PC-9 (cell line): ENCODE measurements at regions of chr12 and their contacts with region 1.

Region 1: GRCh38 chr12:82685790-82686167 is 927 bp upstream of the TMTC2 start:
- DNase-seq: peak; percentile 88 to 90
- H3K4me3 ChIP-seq: peak overlapping the region; percentile 62
- H3K27ac ChIP-seq: peak overlapping the region; percentile 92
- H3K4me1 ChIP-seq: peaks cover 33% of the 10 kb centered on the region
- H3K27me3 ChIP-seq: no peaks in the 10 kb centered on the region
- CTCF ChIP-seq: peak; percentile 93

Region 2: DNA sequence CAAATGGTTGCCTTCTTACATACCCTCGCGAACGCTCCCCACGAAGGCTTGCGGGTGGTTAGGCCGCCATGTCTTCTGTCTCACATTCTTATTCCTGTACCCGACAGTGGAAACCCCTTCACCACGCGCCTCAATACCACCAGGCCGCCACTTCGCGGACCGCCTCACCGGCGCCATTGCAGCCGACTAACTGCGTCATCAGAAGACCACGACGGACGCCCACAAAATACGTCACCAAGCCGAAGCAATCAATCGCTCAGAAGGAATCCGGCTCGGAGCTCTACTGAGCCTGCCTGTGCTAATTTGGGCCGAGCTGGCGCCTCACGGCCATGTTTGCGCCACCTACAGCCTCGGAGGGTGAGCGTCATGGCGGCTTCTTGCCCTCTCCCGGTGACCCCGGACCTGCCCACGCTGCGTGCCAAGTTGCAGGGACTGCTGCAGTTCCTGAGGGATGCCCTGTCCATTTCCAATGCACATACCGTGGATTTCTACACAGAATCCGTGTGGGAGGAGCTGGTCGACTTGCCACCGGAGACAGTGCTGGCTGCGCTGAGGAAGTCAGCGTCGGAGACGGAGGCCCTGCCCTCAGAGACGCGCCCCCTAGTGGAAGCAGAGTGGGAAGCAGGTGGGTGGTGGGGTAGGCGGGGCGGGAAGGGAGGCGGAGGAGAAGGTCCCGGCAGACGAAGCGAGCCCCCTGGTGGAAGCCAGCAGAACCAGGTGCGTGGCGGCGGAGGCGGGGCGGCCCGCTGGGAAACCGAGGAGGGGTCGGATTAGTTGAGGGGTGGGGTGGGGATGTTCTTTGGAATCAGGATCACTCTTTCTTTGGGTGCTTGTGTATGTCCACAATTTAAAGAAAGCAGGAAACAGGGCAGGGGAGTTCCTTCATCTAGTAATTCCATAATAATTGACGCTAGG is 327.3 kb before region 1 on chr12 and contains the starts of genes CCDC59 and METTL25:
- CTCF ChIA-PET with region 1: no interaction called
- POLR2A ChIA-PET with region 1: no interaction called
- intact Hi-C with region 1: loop called (anchors 1 kb)
- DNase-seq: peak; percentile 91 to 93
- H3K4me3 ChIP-seq: peak within 1 kb of the TSS; percentile 89
- H3K27ac ChIP-seq: peak within 1 kb of the TSS; percentile 86
- H3K4me1 ChIP-seq: peaks cover 10% of the 10 kb centered on the region; the same call in 1 of the 2 replicates
- H3K27me3 ChIP-seq: no peaks in the 10 kb centered on the region
- CTCF ChIP-seq: peak; percentile 97
- total RNA-seq, gene CCDC59: 28.9 and 49.9 TPM in 2 replicates
- total RNA-seq, gene METTL25: 2.2 and 2.8 TPM in 2 replicates

Region 3: GRCh38 chr12:82527165-82527780 is 158.5 kb before region 1 on chr12:
- CTCF ChIA-PET with region 1: interaction called, 4 read pairs
- POLR2A ChIA-PET with region 1: no interaction called
- intact Hi-C with region 1: loop called (anchors 1 kb)
- DNase-seq: peak; percentile 21 to 37
- H3K4me3 ChIP-seq: no peak overlapping the region
- H3K27ac ChIP-seq: no peak overlapping the region
- H3K4me1 ChIP-seq: no peaks in the 10 kb centered on the region
- H3K27me3 ChIP-seq: no peaks in the 10 kb centered on the region
- CTCF ChIP-seq: peak; percentile 94

Region 4: GRCh38 chr12:83003044-83003443 is 317.3 kb after region 1 on chr12:
- CTCF ChIA-PET with region 1: no interaction called
- POLR2A ChIA-PET with region 1: no interaction called
- intact Hi-C with region 1: loop called (anchors 5 kb)
- DNase-seq: no peak
- H3K4me3 ChIP-seq: no peak overlapping the region
- H3K27ac ChIP-seq: no peak overlapping the region
- H3K4me1 ChIP-seq: no peaks in the 10 kb centered on the region
- H3K27me3 ChIP-seq: no peaks in the 10 kb centered on the region
- CTCF ChIP-seq: no peak

Region 5: DNA sequence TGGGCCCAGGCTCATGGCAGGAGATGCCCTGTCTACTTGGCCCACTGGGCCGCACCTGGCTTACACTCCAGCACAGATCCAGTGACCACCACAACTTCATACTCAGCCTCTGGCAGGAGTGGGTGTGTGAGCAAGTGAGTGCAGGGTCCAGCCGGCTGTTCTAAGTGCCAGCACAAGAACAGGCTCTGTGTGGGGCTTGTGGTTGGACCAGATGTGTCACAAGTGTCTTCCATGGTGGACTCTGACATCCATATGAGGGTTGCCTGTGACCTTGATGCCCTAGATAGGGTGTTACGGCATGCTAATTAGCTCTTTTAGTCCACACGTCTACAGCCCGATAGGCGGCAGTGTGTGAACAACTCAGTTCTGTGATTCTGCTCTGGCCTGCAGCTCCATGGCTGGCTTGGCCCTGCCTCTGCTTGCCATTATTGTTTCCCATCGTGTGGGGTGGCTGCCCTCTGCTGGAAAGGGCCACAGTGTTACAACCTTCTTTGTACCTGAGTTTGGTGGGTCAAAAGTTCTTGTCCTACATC is 1137.7 kb after region 1 on chr12:
- CTCF ChIA-PET with region 1: interaction called, 7 read pairs
- POLR2A ChIA-PET with region 1: no interaction called
- intact Hi-C with region 1: loop called (anchors 1 kb)
- DNase-seq: peak; percentile 38 to 41
- H3K4me3 ChIP-seq: no peak overlapping the region
- H3K27ac ChIP-seq: no peak overlapping the region
- H3K4me1 ChIP-seq: no peaks in the 10 kb centered on the region
- H3K27me3 ChIP-seq: no peaks in the 10 kb centered on the region
- CTCF ChIP-seq: peak; percentile 66